HCT116 (cell line): ENCODE measurements at regions of chr7 and their contacts with region 1.

Region 1: GRCh38 chr7:27113991-27114769 is 11.7 kb upstream of the HOXA2 start:
- DNase-seq: no peak
- ATAC-seq: peak; percentile 30
- H3K4me3 ChIP-seq: peak overlapping the region; percentile 57 to 60
- H3K27ac ChIP-seq: peak overlapping the region; percentile 60
- H3K4me1 ChIP-seq: peaks cover 57 to 71% of the 10 kb centered on the region in 2 experiments
- H3K27me3 ChIP-seq: peaks cover 7% of the 10 kb centered on the region; the same call in 1 of the 2 replicates
- CTCF ChIP-seq: no peak
- POLR2A ChIP-seq: no peak
- RAD21 ChIP-seq: no peak

Region 2: DNA sequence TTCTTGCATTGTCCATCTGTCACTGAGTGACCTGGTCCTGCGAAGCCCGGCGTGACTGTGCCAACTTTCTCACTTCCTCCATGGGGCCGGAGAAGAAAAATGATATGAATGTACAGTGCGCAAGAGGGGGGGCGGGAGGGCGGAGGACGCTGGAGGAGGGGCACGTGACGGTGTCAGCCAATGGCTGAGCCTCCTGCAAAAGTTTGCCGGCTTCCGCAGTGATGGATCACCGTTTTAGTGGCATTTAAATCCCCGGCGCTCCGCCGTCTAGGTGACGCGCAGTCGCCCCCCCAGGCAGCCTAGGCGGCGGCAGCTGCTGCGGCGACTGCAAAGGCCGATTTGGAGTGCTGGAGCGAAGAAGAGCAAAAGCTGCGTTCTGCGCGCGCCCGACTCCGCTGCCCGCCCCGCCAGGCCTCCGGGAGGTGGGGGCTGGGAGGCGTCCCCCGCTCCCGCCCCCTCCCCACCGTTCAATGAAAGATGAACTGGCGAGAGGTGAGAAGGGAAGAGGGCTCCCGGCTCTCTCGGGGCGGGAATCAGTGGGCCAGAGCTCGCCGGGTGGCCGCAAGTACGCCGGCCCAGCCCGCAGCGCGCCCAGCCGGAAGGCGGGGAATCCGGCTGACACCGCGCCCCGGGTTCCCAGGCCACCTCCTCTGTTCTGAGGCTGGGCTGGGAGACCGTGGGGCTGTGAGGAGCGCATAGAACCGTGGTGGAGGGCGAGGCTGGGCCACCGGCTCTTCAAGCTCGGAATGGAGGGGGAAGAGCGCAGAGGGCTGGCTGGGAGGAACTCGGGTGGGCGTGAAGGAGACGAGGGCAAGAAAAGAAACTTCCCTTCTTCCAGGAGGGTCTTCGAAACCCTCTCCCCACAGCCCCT is 18.0 kb before region 1 on chr7 and contains the start of gene HOXA1:
- CTCF ChIA-PET with region 1: no interaction called
- POLR2A ChIA-PET with region 1: interaction called, 8 read pairs
- RAD21 ChIA-PET with region 1: interaction called in 1 of 2 experiments, 3 read pairs
- intact Hi-C with region 1: loop called (anchors 1 kb)
- DNase-seq: peak; percentile 80
- ATAC-seq: peak; percentile 91
- H3K4me3 ChIP-seq: peak within 1 kb of the TSS; percentile 74 to 86
- H3K27ac ChIP-seq: peak within 1 kb of the TSS; percentile 77
- H3K4me1 ChIP-seq: peaks cover 10 to 19% of the 10 kb centered on the region in 2 experiments; a peak in 3 of 4 replicates
- H3K27me3 ChIP-seq: no peaks in the 10 kb centered on the region
- CTCF ChIP-seq: no peak
- POLR2A ChIP-seq: no peak
- RAD21 ChIP-seq: no peak; the same call in 1 of the 2 replicates
- total RNA-seq, gene HOXA1: 2.8 TPM

Region 3: GRCh38 chr7:27130540-27131389 is 16.6 kb after region 1 on chr7 and contains the start of gene HOXA4:
- CTCF ChIA-PET with region 1: interaction called, 3 read pairs
- POLR2A ChIA-PET with region 1: interaction called, 4 read pairs
- RAD21 ChIA-PET with region 1: interaction called in 1 of 2 experiments, 4 read pairs
- intact Hi-C with region 1: loop called (anchors 2 kb)
- DNase-seq: no peak
- ATAC-seq: peak; percentile 91
- H3K4me3 ChIP-seq: peak within 1 kb of the TSS; percentile 55 to 64
- H3K27ac ChIP-seq: peak within 1 kb of the TSS; percentile 61; the same call in 1 of the 2 replicates
- H3K4me1 ChIP-seq: peaks cover 31 to 75% of the 10 kb centered on the region in 2 experiments
- H3K27me3 ChIP-seq: peaks cover 24% of the 10 kb centered on the region
- CTCF ChIP-seq: no peak
- POLR2A ChIP-seq: peak; percentile 63
- RAD21 ChIP-seq: no peak
- total RNA-seq, gene HOXA4: 2.0 TPM